B cell (primary cell): ENCODE measurements at regions of chr18 and their contacts with region 1.

Region 1: DNA sequence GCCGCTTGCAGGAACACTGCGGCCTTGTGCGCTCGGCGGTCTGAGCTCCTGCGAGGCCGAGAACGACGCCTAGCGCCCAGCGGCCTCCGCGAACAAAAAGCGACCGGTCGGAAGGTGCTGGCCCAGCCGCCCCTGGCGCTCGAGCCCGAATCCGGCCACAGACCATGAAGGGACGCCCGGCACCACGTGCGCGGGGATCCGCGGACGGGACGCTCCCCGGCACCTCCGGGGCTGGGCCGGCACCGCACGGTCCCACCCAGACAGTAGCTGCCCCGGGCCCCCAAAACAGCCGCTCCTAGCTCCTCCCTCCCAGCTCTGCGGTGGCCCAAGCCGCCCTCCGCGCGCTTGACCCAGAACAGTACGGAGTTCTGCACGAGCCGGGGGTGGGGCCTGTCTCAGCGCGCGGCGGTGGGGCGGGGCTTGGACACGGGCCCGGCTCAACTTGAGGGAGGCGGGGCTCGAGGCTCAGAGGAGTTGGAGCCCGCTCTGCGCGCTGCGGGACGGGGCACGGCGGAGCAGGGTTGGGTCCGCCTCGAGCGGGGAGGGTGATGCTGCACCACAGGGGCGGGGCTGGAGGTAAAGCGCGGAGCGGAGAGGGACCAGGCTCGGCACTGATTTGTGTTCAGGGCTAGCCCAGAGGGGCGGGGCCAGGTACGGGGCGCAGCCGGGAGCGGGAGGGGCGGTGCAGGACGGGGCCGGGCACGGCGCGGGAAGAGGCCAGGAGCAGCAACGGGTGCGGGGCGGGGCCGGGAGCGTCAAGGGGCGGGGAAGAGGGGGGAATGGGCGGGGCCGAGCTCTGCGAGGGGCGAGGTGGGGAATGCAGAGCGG is 538 bp upstream of the IMPA2 start:
- DNase-seq: peak; percentile 97
- ATAC-seq: peak; percentile 87
- H3K4me3 ChIP-seq: peak overlapping the region; percentile 44 to 81 (median 68)
- H3K4me3 Mint-ChIP-seq: peak overlapping the region; percentile 90
- H3K27ac ChIP-seq: peak overlapping the region in 1 of 2 donors; percentile 23
- H3K27ac Mint-ChIP-seq: peak overlapping the region; percentile 86
- H3K4me1 ChIP-seq: peaks cover 5 to 15% of the 10 kb centered on the region in 2 donors
- H3K4me1 Mint-ChIP-seq: peaks cover 14% of the 10 kb centered on the region
- H3K27me3 ChIP-seq: no peaks in the 10 kb centered on the region
- H3K27me3 Mint-ChIP-seq: no peaks in the 10 kb centered on the region
- CTCF ChIP-seq: no peak

Region 2: GRCh38 chr18:10525371-10526210 is 1455.2 kb before region 1 on chr18 and contains the start of gene NAPG:
- CTCF ChIA-PET with region 1: no interaction called
- POLR2A ChIA-PET with region 1: no interaction called
- intact Hi-C with region 1: loop called (anchors 5 kb)
- DNase-seq: peak; percentile 96
- ATAC-seq: peak; percentile 90
- H3K4me3 ChIP-seq: peak within 1 kb of the TSS; percentile 79 to 94 (median 88)
- H3K4me3 Mint-ChIP-seq: peak within 1 kb of the TSS; percentile 99
- H3K27ac ChIP-seq: peak within 1 kb of the TSS; percentile 77 to 80
- H3K27ac Mint-ChIP-seq: peak within 1 kb of the TSS; percentile 96
- H3K4me1 ChIP-seq: peaks cover 20 to 39% of the 10 kb centered on the region in 2 donors
- H3K4me1 Mint-ChIP-seq: peaks cover 51% of the 10 kb centered on the region
- H3K27me3 ChIP-seq: no peaks in the 10 kb centered on the region
- H3K27me3 Mint-ChIP-seq: no peaks in the 10 kb centered on the region
- CTCF ChIP-seq: no peak
- total RNA-seq, gene NAPG: 31.8 and 38.7 TPM in 2 replicates

Region 3: DNA sequence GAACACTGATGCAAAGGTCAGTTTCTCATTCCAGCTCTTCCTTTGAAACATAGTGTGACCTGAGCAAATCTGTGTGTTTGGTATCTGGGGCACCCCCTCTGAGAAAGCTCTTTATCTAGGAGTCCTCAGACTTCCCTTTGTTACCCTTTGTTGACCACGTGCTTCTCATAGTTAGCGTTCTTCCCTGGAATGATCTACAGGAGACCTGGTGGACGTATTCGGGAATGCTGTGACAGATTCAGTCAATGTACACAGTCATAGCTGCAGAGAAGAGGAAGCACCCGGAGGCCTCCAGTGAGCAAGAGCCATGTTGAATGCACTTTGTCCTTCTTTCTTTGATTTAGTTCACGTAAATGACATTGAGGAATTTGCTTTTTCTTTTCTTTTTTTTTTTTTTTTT is 140.3 kb before region 1 on chr18:
- CTCF ChIA-PET with region 1: no interaction called
- POLR2A ChIA-PET with region 1: no interaction called
- intact Hi-C with region 1: no loop called
- DNase-seq: no peak
- ATAC-seq: no peak
- H3K4me3 ChIP-seq: no peak overlapping the region
- H3K4me3 Mint-ChIP-seq: no peak overlapping the region
- H3K27ac ChIP-seq: no peak overlapping the region
- H3K27ac Mint-ChIP-seq: no peak overlapping the region
- H3K4me1 ChIP-seq: no peaks in the 10 kb centered on the region
- H3K4me1 Mint-ChIP-seq: no peaks in the 10 kb centered on the region
- H3K27me3 ChIP-seq: peaks cover 0 to 2% (median 0%) of the 10 kb centered on the region in 4 experiments
- H3K27me3 Mint-ChIP-seq: peaks cover 4% of the 10 kb centered on the region
- CTCF ChIP-seq: no peak

Region 4: GRCh38 chr18:11883153-11883552 is 97.6 kb before region 1 on chr18:
- CTCF ChIA-PET with region 1: no interaction called
- POLR2A ChIA-PET with region 1: interaction called, 4 read pairs
- intact Hi-C with region 1: loop called (anchors 1 kb)
- DNase-seq: peak; percentile 81
- ATAC-seq: peak; percentile 94
- H3K4me3 ChIP-seq: no peak overlapping the region
- H3K4me3 Mint-ChIP-seq: peak overlapping the region; percentile 52
- H3K27ac ChIP-seq: peak overlapping the region; percentile 41 to 61
- H3K27ac Mint-ChIP-seq: peak overlapping the region; percentile 75
- H3K4me1 ChIP-seq: peaks cover 35 to 44% of the 10 kb centered on the region in 2 donors
- H3K4me1 Mint-ChIP-seq: peaks cover 44% of the 10 kb centered on the region
- H3K27me3 ChIP-seq: no peaks in the 10 kb centered on the region
- H3K27me3 Mint-ChIP-seq: no peaks in the 10 kb centered on the region
- CTCF ChIP-seq: no peak

Region 5: DNA sequence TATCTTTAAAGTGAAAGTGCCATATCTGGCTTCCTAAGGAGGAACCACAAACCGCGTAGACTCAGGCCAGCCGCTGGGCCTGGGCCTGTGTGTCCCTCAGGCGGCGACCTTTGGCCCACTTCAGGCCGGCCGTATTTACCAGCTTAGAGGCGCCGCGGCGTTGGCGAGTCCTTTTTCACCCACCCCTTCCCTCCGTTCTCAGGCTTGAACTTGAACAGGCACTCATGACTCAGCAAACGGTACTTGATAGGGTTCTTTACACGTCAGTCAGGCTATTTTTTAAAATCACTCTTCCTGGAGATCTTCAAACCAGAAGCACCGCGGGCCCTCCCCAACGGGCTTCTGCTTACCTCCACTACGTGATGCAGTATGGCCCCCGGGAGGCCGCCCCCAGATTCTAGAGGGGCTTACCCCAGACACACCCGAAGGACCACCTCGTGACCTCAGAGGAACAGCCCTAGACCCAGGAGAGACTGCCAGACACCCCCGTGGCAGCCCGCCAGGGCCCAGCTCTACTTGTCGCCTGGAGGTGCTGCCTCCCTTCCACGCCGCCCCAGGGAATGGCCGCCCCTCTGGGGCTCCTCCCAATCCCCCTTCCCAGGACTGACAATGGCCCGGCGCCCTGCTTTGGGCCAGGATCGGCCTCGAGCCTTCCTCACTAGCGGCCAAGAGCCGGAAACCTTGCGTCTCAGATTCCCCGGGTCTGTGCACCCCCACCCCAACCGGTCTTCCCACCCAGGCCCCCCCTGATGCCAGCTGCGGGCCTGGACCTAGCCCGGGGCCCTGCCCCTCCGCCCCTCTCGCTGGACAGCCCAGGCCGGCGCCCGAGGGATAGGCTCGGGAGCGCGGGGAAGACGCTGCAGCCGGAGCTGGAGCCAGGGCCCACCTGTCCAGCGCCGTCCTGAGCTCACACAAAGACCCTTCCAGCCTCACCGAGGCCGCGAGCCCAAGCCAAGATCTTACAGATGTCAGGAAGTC is 33.3 kb before region 1 on chr18:
- CTCF ChIA-PET with region 1: no interaction called
- POLR2A ChIA-PET with region 1: interaction called, 13 read pairs
- intact Hi-C with region 1: loop called (anchors 1 kb)
- DNase-seq: peak; percentile 82
- ATAC-seq: peak; percentile 77
- H3K4me3 ChIP-seq: peak overlapping the region; percentile 28 to 65 (median 60)
- H3K4me3 Mint-ChIP-seq: peak overlapping the region; percentile 92
- H3K27ac ChIP-seq: peak overlapping the region; percentile 0 to 60
- H3K27ac Mint-ChIP-seq: peak overlapping the region; percentile 78
- H3K4me1 ChIP-seq: peaks cover 0 to 13% of the 10 kb centered on the region in 2 donors
- H3K4me1 Mint-ChIP-seq: peaks cover 11% of the 10 kb centered on the region
- H3K27me3 ChIP-seq: no peaks in the 10 kb centered on the region
- H3K27me3 Mint-ChIP-seq: no peaks in the 10 kb centered on the region
- CTCF ChIP-seq: no peak

Region 6: GRCh38 chr18:11960743-11961380 is 19.9 kb before region 1 on chr18:
- CTCF ChIA-PET with region 1: no interaction called
- POLR2A ChIA-PET with region 1: no interaction called
- intact Hi-C with region 1: no loop called
- DNase-seq: no peak
- ATAC-seq: no peak
- H3K4me3 ChIP-seq: no peak overlapping the region
- H3K4me3 Mint-ChIP-seq: no peak overlapping the region
- H3K27ac ChIP-seq: no peak overlapping the region
- H3K27ac Mint-ChIP-seq: no peak overlapping the region
- H3K4me1 ChIP-seq: no peaks in the 10 kb centered on the region
- H3K4me1 Mint-ChIP-seq: no peaks in the 10 kb centered on the region
- H3K27me3 ChIP-seq: no peaks in the 10 kb centered on the region
- H3K27me3 Mint-ChIP-seq: peaks cover 7% of the 10 kb centered on the region
- CTCF ChIP-seq: no peak

Region 7: GRCh38 chr18:12038639-12039417 is 58.1 kb after region 1 on chr18:
- CTCF ChIA-PET with region 1: interaction called, 5 read pairs
- POLR2A ChIA-PET with region 1: no interaction called
- intact Hi-C with region 1: loop called (anchors 2 kb)
- DNase-seq: peak; percentile 85
- ATAC-seq: peak; percentile 97
- H3K4me3 ChIP-seq: peak overlapping the region in 4 of 5 experiments; percentile 49 to 67 (median 56)
- H3K4me3 Mint-ChIP-seq: peak overlapping the region; percentile 82
- H3K27ac ChIP-seq: no peak overlapping the region
- H3K27ac Mint-ChIP-seq: no peak overlapping the region
- H3K4me1 ChIP-seq: peaks cover 15 to 20% of the 10 kb centered on the region in 2 donors
- H3K4me1 Mint-ChIP-seq: peaks cover 24% of the 10 kb centered on the region
- H3K27me3 ChIP-seq: peaks cover 0 to 13% (median 2%) of the 10 kb centered on the region in 4 experiments
- H3K27me3 Mint-ChIP-seq: peaks cover 3% of the 10 kb centered on the region
- CTCF ChIP-seq: peak; percentile 99

Region 8: DNA sequence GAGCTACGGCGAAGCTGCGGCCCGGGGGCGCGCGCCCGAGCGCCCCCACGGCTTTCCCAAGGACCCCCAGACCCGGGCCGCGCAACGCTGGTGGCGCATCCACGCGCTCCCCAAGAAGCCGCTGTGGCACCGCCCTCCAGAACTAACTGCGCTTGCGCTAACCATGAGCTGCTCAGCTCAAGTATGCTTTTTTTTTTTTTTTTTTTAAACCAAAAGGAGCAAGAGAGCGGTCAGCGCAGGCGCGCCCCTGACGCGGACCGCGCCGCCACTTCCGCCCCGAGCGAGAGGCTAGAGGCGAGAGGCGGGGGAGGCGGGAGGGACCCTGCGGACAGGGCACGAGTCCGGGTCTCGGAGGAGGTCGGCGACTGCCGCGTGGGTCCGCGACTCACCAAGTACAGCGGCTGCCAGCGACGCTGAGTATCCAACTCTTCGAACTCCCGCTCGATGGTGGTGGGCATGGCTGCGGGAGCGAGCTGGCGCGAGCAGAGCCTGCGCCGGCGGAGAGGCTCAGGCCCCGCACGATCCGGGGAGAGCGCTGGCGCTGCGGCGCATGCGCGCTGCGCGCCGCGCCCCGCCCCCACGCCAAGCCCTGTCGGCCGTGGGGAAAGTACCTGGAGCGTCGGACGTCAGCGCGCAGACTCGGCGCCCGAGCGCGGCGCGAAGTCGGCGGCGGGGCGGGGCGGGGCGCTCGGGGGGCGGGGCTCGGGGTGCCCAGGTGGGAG is 903.1 kb after region 1 on chr18 and contains the start of gene PTPN2:
- CTCF ChIA-PET with region 1: no interaction called
- POLR2A ChIA-PET with region 1: no interaction called
- intact Hi-C with region 1: loop called (anchors 5 kb)
- DNase-seq: peak; percentile 97
- ATAC-seq: peak; percentile 76
- H3K4me3 ChIP-seq: peak within 1 kb of the TSS; percentile 66 to 92 (median 78)
- H3K4me3 Mint-ChIP-seq: peak within 1 kb of the TSS; percentile 89
- H3K27ac ChIP-seq: peak within 1 kb of the TSS; percentile 99
- H3K27ac Mint-ChIP-seq: peak within 1 kb of the TSS; percentile 95
- H3K4me1 ChIP-seq: peaks cover 64 to 71% of the 10 kb centered on the region in 2 donors
- H3K4me1 Mint-ChIP-seq: peaks cover 71% of the 10 kb centered on the region
- H3K27me3 ChIP-seq: no peaks in the 10 kb centered on the region
- H3K27me3 Mint-ChIP-seq: no peaks in the 10 kb centered on the region
- CTCF ChIP-seq: no peak
- total RNA-seq, gene PTPN2: 64.8 and 75.5 TPM in 2 replicates